Activated T-helper 2 cell treated with anti-CD3 and anti-CD28 coated beads, Interferon-gamma antibody, Interleukin-2, Interleukin-4, amounts not matched to agents 10 μg/mL and 5 μg/mL and 100 μg/mL, durations not matched to agents 14 hours and 24 hours and 36 hours (primary cell): ENCODE measurements at regions of chrX and their contacts with region 1.

Region 1: GRCh38 chrX:135985141-135985972 is at the start of gene SLC9A6:
- DNase-seq: peak; percentile 55
- H3K4me3 Mint-ChIP-seq: peak within 1 kb of the TSS; percentile 90
- H3K27ac Mint-ChIP-seq: peak within 1 kb of the TSS; percentile 88
- H3K4me1 Mint-ChIP-seq: peaks cover 40% of the 10 kb centered on the region
- H3K27me3 Mint-ChIP-seq: no peaks in the 10 kb centered on the region
- total RNA-seq, gene SLC9A6: 10.5 and 10.7 TPM in 2 replicates

Region 2: DNA sequence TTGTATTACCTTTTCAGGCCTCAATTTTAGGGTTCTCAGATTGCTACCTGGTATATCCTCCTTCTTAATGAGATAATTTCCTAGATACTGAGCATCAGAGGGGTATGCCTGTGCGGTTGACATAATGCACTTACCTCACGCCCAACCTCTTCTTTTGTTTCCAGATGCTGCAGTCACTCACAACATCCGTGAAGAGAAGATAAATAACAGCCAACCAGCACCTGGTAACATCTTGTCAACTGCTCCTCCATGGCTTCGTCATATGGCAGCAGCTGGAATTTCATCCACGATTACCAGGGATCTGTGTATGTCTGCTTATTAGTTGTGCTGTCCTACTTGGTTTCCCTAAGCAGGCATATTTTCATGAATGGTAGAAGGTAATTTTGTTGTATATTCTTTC is 75.1 kb before region 1 on chrX:
- intact Hi-C with region 1: no loop called
- DNase-seq: no peak
- H3K4me3 Mint-ChIP-seq: no peak overlapping the region
- H3K27ac Mint-ChIP-seq: no peak overlapping the region
- H3K4me1 Mint-ChIP-seq: no peaks in the 10 kb centered on the region
- H3K27me3 Mint-ChIP-seq: peaks cover 1% of the 10 kb centered on the region

Region 3: GRCh38 chrX:135973548-135974278 is 11.6 kb before region 1 on chrX and contains the start of gene MMGT1:
- intact Hi-C with region 1: loop called (anchors 1 kb)
- DNase-seq: peak; percentile 74
- H3K4me3 Mint-ChIP-seq: peak within 1 kb of the TSS; percentile 97
- H3K27ac Mint-ChIP-seq: peak within 1 kb of the TSS; percentile 97
- H3K4me1 Mint-ChIP-seq: peaks cover 31% of the 10 kb centered on the region
- H3K27me3 Mint-ChIP-seq: peaks cover 11% of the 10 kb centered on the region
- total RNA-seq, gene MMGT1: 24.0 and 24.6 TPM in 2 replicates